ENCODE measurements at regions of chr4 and their contacts with region 1.

Region 1: GRCh38 chr4:120071192-120071795 is 4.6 kb upstream of the MAD2L1 start:
- DNase-seq: peak; percentile 70
- ATAC-seq: no peak
- H3K4me3 ChIP-seq: no peak overlapping the region
- H3K27ac ChIP-seq: no peak overlapping the region
- H3K4me1 ChIP-seq: peaks cover 18% of the 10 kb centered on the region
- H3K27me3 ChIP-seq: no peaks in the 10 kb centered on the region
- CTCF ChIP-seq: peak; percentile 73

Region 2: DNA sequence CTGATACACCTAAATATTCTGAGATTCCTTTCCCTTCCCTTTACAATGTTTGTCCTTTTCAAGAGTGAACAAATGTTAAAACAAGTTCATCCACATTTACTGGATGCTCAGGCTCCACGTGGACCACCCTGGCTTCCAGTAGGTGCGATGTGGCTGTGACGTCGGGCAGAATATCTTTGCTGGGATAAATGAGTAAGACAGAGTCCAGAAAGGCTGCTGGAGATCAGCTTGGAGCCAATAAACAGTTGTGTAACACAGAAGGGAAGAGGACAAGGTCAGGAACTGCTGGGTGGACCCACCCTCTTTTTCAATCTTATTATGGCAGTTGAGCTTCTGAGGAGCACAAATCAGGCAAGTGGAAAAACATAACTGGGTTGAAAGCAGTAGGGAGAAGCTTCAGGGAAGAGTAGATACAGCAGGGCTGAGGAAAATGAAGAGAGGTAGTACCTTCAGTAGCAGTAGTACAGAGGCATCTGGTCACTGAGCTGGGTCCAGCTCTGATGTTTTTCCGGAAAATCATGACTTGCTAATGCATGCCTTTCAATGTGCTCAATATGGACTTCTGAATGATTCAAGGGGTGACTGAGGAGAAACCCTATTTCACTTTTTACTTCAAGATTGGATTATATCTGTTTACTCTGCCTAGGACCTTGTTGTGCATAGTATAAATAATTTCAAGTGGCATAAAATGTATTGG is 167.1 kb after region 1 on chr4:
- CTCF ChIA-PET with region 1: no interaction called
- POLR2A ChIA-PET with region 1: no interaction called
- intact Hi-C with region 1: loop called (anchors 10 kb)
- DNase-seq: no peak
- ATAC-seq: no peak
- H3K4me3 ChIP-seq: no peak overlapping the region
- H3K27ac ChIP-seq: no peak overlapping the region
- H3K4me1 ChIP-seq: no peaks in the 10 kb centered on the region
- H3K27me3 ChIP-seq: peaks cover 4% of the 10 kb centered on the region; the same call in 1 of the 2 replicates
- CTCF ChIP-seq: no peak

Region 3: GRCh38 chr4:120731561-120731960 is 660.3 kb after region 1 on chr4:
- CTCF ChIA-PET with region 1: no interaction called
- POLR2A ChIA-PET with region 1: no interaction called
- intact Hi-C with region 1: no loop called
- DNase-seq: no peak
- ATAC-seq: no peak; the same call in 1 of the 2 replicates
- H3K4me3 ChIP-seq: no peak overlapping the region
- H3K27ac ChIP-seq: no peak overlapping the region
- H3K4me1 ChIP-seq: no peaks in the 10 kb centered on the region
- H3K27me3 ChIP-seq: no peaks in the 10 kb centered on the region
- CTCF ChIP-seq: no peak

Region 4: DNA sequence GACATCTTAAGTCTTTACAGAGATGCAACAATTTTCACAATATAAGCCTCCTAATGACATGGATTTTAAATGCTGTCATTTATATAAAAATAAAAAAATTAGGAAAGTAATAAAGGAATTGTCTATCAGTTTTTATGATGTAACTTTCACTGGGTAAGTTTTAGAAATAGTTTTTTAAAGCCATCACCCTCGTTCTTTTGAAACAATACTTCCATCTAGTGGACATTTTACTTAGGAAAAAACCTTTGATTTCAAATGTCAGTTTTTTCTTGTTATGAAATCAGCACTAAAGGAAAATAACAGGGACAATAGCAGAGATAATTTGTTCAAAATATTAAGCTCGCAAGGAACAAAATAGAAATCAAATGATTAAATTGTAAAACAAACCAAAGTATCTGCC is 1025.3 kb after region 1 on chr4:
- CTCF ChIA-PET with region 1: no interaction called
- POLR2A ChIA-PET with region 1: no interaction called
- intact Hi-C with region 1: loop called (anchors 2 kb)
- DNase-seq: peak; percentile 50
- ATAC-seq: no peak
- H3K4me3 ChIP-seq: no peak overlapping the region
- H3K27ac ChIP-seq: peak overlapping the region; percentile 20; the same call in 1 of the 2 replicates
- H3K4me1 ChIP-seq: no peaks in the 10 kb centered on the region
- H3K27me3 ChIP-seq: no peaks in the 10 kb centered on the region
- CTCF ChIP-seq: peak; percentile 61

Region 5: GRCh38 chr4:121252224-121252806 is 1181.0 kb after region 1 on chr4:
- CTCF ChIA-PET with region 1: no interaction called
- POLR2A ChIA-PET with region 1: no interaction called
- intact Hi-C with region 1: loop called (anchors 5 kb)
- DNase-seq: peak; percentile 75
- ATAC-seq: peak; percentile 69
- H3K4me3 ChIP-seq: no peak overlapping the region
- H3K27ac ChIP-seq: no peak overlapping the region
- H3K4me1 ChIP-seq: no peaks in the 10 kb centered on the region
- H3K27me3 ChIP-seq: peaks cover 3% of the 10 kb centered on the region; the same call in 1 of the 2 replicates
- CTCF ChIP-seq: peak; percentile 80

Measured in PC-3 (cell line).